ENCODE measurements at regions of chr10 and their contacts with region 1.

Region 1: DNA sequence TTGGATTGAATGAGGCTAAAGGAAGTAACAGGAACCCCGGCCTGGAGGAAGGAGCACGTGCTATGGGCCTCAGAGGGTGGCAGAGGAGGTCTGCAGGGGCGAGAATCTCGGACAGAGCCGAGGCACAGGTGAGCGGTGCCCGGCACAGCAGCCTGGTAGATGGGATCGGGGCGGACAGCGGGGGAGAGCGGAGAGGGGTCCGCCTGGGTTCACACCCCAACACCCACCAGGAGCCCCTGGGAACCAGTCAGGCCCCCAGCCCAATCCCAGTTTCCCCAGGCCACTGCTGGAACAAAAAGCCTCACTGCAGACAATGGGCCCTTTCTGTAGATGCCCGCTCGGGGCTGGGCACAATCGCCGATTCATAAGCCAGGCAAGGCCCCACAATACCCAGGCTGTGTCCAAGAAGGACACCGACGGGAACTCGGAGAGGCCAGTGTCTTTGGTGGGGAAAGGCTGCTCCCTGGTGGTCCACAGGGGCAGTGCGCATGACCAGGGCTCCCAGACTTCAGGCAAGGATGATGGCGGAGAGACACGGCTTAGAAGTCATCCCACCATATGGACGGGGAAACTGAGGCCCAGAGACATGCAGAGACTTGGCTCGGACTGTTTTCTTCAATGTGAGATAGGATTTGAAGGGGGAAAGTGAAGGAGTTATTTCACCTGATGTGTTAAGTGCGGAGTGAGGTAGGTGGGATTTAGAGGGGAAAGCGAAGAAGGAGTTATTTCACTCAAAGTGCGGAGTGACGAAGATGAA is 106.9 kb upstream of the GPR26 start:
- DNase-seq: peak; percentile 44 to 60 (median 53)
- H3K4me3 ChIP-seq: no peak overlapping the region
- H3K4me3 Mint-ChIP-seq: no peak overlapping the region
- H3K27ac ChIP-seq: no peak overlapping the region
- H3K27ac Mint-ChIP-seq: no peak overlapping the region
- H3K4me1 ChIP-seq: no peaks in the 10 kb centered on the region
- H3K4me1 Mint-ChIP-seq: no peaks in the 10 kb centered on the region
- H3K27me3 ChIP-seq: no peaks in the 10 kb centered on the region
- H3K27me3 Mint-ChIP-seq: peaks cover 6 to 33% of the 10 kb centered on the region in 2 donors

Region 2: DNA sequence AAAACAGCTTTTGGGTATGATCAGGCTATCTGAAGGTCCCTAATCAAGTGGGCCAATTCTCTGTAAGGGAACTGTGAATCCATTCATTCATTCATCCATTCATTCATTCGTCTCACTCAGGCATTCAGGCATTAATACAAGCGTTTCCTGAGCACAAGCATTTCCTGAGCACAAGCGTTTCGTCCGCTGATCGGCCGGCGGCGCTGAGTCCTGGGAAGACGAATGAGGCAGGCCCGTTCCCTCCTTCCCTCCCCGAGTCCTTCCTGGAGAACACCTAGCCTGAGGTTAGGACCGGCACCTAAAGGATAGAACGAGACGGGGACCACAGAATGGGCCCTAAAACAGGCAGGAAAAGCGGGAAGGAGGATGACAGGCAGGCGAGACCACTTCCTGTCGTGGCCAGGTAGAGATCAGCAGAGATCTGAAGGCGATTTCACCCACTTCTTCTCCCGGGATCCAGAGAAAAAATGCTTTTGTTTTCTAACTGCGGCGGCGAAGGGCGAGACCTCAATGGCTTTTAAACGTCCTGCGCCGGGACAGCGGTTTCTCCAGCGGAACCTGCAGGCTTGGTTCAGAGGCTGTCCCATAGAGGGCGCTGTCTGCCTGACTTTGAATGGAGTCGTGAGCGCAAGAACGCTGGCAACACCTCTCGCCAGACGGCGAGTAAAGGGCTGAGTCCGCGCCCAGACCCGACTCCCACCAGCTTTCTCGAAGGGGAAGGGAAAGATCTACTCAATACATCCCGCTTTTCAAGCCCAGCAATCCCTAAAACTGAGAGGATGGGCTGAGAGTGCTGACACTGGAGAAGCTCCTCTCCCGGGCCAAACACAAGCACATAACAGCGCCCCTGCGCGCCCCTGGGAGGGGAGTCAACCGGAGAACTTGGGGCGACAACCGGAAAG is 426.4 kb before region 1 on chr10:
- CTCF ChIA-PET with region 1: interaction called, 27 read pairs
- POLR2A ChIA-PET with region 1: no interaction called
- DNase-seq: peak; percentile 73 to 88 (median 78)
- H3K4me3 ChIP-seq: peak overlapping the region; percentile 19
- H3K4me3 Mint-ChIP-seq: peak overlapping the region; percentile 70 to 85 (median 79)
- H3K27ac ChIP-seq: no peak overlapping the region
- H3K27ac Mint-ChIP-seq: peak overlapping the region in 5 of 8 donors; percentile 12 to 86 (median 75)
- H3K4me1 ChIP-seq: peaks cover 39% of the 10 kb centered on the region
- H3K4me1 Mint-ChIP-seq: peaks cover 27 to 43% (median 27%) of the 10 kb centered on the region in 3 donors
- H3K27me3 ChIP-seq: peaks cover 44% of the 10 kb centered on the region
- H3K27me3 Mint-ChIP-seq: peaks cover 42 to 80% of the 10 kb centered on the region in 2 donors

Region 3: GRCh38 chr10:123599366-123599849 is 40.2 kb after region 1 on chr10:
- CTCF ChIA-PET with region 1: no interaction called
- POLR2A ChIA-PET with region 1: no interaction called
- DNase-seq: no peak
- H3K4me3 ChIP-seq: no peak overlapping the region
- H3K4me3 Mint-ChIP-seq: no peak overlapping the region
- H3K27ac ChIP-seq: no peak overlapping the region
- H3K27ac Mint-ChIP-seq: no peak overlapping the region
- H3K4me1 ChIP-seq: no peaks in the 10 kb centered on the region
- H3K4me1 Mint-ChIP-seq: no peaks in the 10 kb centered on the region
- H3K27me3 ChIP-seq: no peaks in the 10 kb centered on the region
- H3K27me3 Mint-ChIP-seq: peaks cover 8 to 27% of the 10 kb centered on the region in 2 donors

Region 4: DNA sequence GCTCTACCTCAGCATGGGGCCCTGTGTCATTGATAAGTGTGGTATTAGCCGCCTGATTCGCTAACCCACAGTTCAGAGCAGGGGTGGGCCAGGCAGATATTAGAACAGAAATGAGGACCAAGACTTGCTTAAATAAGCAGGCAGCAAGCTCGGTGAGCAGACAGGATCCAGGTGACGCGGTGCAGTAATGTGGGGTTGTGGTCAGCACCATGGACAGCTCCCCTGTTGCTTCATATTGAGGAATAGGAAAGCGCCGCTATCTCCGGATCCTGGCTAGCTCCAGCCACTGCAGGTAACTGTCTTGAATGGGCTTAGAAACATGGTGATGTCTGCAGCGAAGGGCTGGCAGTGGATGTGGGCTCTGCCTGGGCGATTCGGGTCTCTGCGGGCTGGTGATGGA is 55.6 kb after region 1 on chr10:
- CTCF ChIA-PET with region 1: no interaction called
- POLR2A ChIA-PET with region 1: no interaction called
- DNase-seq: peak in 4 of 5 donors; percentile 7 to 50 (median 28)
- H3K4me3 ChIP-seq: no peak overlapping the region
- H3K4me3 Mint-ChIP-seq: no peak overlapping the region
- H3K27ac ChIP-seq: no peak overlapping the region
- H3K27ac Mint-ChIP-seq: no peak overlapping the region
- H3K4me1 ChIP-seq: no peaks in the 10 kb centered on the region
- H3K4me1 Mint-ChIP-seq: no peaks in the 10 kb centered on the region
- H3K27me3 ChIP-seq: no peaks in the 10 kb centered on the region
- H3K27me3 Mint-ChIP-seq: peaks cover 5 to 9% of the 10 kb centered on the region in 2 donors

Region 5: DNA sequence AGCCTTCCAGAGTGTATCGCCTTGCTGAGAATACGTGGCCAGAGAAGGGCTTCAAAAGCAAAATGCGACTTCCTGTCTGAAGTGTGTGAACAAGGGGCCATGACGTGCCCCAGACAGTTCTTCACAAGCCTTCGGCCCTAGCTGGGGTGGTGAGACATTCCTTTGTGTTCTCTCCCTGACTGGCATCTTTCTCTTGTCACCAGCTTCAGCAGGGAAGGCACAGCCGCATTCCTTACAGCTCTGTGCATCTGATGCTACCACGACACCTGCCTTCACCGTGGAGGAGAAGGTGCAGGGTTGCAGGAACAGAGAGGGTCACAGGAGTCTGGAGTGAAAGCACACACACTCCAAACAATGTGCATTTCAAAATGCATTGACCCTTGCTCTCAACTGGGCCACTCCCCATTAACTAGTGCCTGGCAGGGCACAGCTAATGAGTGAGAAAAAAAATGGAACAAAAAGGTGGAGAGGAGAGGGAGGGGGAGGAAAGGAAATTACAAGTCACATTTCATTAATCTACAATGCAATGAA is 200.3 kb after region 1 on chr10:
- CTCF ChIA-PET with region 1: no interaction called
- POLR2A ChIA-PET with region 1: no interaction called
- DNase-seq: no peak
- H3K4me3 ChIP-seq: no peak overlapping the region
- H3K4me3 Mint-ChIP-seq: no peak overlapping the region
- H3K27ac ChIP-seq: no peak overlapping the region
- H3K27ac Mint-ChIP-seq: no peak overlapping the region
- H3K4me1 ChIP-seq: no peaks in the 10 kb centered on the region
- H3K4me1 Mint-ChIP-seq: no peaks in the 10 kb centered on the region
- H3K27me3 ChIP-seq: no peaks in the 10 kb centered on the region
- H3K27me3 Mint-ChIP-seq: no peaks in the 10 kb centered on the region

Measured in CD8-positive, alpha-beta memory T cell (primary cell).